ENCODE measurements at regions of chr10 and their contacts with region 1.

Region 1: DNA sequence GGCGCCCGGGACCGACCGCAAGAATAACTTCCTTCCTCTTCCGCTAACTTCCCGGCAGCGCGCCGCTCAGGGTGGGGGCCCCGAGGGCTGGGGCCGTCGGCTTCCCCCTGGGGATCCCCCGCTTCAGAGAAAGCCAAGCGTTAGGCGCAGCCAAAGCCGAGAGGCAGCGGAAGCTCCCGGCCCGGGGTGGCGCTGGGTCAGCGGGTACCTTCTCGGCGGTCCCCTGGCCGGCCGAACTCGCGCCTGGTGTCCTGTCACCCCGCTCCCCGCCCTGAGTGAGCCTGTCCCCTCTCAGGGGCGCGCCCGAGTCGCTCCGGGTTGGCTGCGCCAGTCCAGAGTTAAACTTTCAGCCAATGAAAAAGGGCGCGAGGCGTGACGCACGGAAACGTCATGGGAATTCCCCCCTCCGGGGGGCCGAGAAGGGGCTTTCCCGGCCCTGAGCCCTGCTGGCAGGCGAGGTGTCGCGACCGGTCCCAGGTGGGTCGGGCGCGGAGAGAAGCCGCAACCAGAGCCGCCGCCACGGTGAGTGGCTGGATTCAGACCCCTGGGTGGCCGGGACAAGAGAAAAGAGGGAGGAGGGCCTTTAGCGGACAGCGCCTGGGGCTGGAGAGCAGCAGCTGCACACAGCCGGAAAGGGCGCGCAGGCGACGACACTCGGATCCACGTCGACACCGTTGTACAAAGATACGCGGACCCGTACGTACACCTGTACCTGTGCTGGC is 1.3 kb upstream of the NFKB2 start:
- DNase-seq: peak; percentile 98
- H3K4me3 ChIP-seq: peak overlapping the region; percentile 61 to 76 (median 68)
- H3K27ac ChIP-seq: peak overlapping the region; percentile 97 to 99 (median 98)
- H3K4me1 ChIP-seq: peaks cover 0 to 47% (median 45%) of the 10 kb centered on the region in 4 donors
- H3K27me3 ChIP-seq: no peaks in the 10 kb centered on the region
- CTCF ChIP-seq: peak; percentile 18 to 99 (median 70)
- EP300 ChIP-seq: peak in 2 of 4 donors; percentile 78 to 92
- POLR2A ChIP-seq: peak; percentile 51 to 55

Region 2: GRCh38 chr10:101812606-101813005 is 581.6 kb before region 1 on chr10:
- intact Hi-C with region 1: no loop called
- DNase-seq: no peak
- H3K4me3 ChIP-seq: no peak overlapping the region
- H3K27ac ChIP-seq: no peak overlapping the region
- H3K4me1 ChIP-seq: peaks cover 0 to 51% (median 44%) of the 10 kb centered on the region in 4 donors
- H3K27me3 ChIP-seq: no peaks in the 10 kb centered on the region
- CTCF ChIP-seq: no peak
- EP300 ChIP-seq: no peak
- POLR2A ChIP-seq: no peak

Region 3: DNA sequence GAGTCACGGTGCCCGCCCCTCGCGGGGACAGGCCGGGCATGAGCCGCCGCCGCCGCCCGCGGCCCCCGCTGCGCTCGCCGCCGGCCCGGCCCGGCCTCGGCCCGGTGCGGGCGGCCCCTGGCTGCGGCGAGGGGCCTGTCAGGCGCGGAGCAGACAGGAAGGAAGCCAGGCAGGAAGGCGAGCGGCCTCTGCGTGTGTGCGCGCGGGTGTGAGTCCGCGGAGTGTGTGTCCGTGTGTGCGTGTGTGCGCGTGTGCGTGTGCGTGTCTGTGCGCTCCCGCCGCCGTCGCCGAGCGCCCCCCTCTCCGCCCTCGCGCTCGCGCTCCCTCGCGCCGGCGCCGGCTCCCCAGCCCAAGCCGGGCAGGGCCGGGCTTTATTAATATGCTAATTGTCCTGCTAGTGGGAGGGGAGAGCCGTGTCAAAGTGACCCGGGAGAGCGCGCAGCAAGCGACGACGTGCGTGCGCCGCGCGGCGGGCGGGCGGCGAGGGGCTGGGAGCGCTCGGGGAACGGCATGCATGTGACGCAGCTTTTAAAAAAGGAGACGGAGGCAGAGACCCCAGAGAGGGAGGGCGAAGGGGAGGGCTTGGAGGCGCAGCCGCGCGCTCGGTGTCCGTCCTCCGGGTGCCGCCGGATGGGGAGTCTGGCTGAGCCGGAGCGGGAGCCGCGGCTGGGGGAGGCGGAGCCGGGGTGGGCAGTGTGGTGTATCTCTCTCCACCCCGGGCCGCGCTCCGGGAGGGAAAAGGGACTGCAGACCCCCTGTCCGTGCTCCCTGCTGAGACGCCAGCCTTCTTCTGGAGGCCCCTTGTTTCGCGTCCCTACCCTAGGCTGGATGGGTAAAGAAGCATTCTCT is 273.9 kb before region 1 on chr10 and contains the start of gene LDB1:
- intact Hi-C with region 1: loop called (anchors 2 kb)
- DNase-seq: peak; percentile 92
- H3K4me3 ChIP-seq: peak within 1 kb of the TSS; percentile 87 to 94 (median 89)
- H3K27ac ChIP-seq: peak within 1 kb of the TSS; percentile 94 to 100 (median 100)
- H3K4me1 ChIP-seq: peaks cover 0 to 59% (median 54%) of the 10 kb centered on the region in 4 donors
- H3K27me3 ChIP-seq: no peaks in the 10 kb centered on the region
- CTCF ChIP-seq: no peak
- EP300 ChIP-seq: peak in 1 of 4 donors; percentile 39
- POLR2A ChIP-seq: peak; percentile 90 to 95
- total RNA-seq, gene LDB1: 62.1 to 88.4 (median 76.4) TPM

Region 4: DNA sequence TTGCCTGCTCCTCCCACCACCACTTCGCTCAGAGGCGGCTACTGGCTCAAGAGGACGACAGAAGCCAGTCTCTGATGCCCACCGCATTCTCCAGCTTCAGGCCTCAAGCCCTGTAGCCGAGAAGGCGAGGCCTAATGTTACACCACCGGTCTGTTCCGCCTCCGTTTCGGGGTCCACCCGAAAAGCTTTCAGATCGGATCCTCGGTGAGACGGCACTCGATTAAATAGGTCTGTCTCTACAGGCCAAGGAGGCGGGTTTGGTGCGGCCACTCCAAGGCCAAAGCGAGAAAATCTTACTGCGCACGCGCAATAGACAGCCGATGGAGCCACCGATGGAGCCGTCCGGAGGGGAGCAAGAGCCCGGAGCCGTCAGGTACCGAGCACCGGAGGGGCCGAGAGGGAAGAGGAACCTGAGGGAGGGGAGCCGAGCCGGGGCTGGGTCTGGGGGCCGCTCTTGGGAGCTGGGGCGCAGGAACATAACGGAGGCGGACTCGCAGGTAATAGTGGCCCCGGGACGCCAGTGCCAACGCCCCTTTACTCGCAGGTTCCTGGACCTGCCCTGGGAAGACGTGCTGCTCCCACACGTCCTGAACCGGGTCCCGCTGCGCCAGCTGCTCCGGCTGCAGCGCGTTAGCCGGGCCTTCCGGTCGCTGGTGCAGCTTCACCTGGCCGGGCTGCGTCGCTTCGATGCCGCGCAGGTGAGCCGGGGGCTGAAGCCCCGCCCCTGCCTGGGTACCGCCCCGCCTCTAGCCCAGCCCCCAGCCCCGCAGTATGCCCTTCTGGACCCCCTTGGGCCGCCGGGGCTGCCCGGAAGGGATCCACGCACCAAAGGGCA is 26.8 kb after region 1 on chr10 and contains the start of gene FBXL15:
- intact Hi-C with region 1: loop called (anchors 1 kb)
- DNase-seq: peak; percentile 99
- H3K4me3 ChIP-seq: peak within 1 kb of the TSS; percentile 61 to 89 (median 76)
- H3K27ac ChIP-seq: peak within 1 kb of the TSS; percentile 86 to 96 (median 91)
- H3K4me1 ChIP-seq: peaks cover 0 to 42% (median 36%) of the 10 kb centered on the region in 4 donors
- H3K27me3 ChIP-seq: peaks cover 0 to 27% (median 6%) of the 10 kb centered on the region in 3 donors
- CTCF ChIP-seq: no peak
- EP300 ChIP-seq: peak in 1 of 4 donors; percentile 63
- POLR2A ChIP-seq: peak in 1 of 2 donors; percentile 33
- total RNA-seq, gene FBXL15: 19.7 to 51.3 (median 34.2) TPM

Region 5: DNA sequence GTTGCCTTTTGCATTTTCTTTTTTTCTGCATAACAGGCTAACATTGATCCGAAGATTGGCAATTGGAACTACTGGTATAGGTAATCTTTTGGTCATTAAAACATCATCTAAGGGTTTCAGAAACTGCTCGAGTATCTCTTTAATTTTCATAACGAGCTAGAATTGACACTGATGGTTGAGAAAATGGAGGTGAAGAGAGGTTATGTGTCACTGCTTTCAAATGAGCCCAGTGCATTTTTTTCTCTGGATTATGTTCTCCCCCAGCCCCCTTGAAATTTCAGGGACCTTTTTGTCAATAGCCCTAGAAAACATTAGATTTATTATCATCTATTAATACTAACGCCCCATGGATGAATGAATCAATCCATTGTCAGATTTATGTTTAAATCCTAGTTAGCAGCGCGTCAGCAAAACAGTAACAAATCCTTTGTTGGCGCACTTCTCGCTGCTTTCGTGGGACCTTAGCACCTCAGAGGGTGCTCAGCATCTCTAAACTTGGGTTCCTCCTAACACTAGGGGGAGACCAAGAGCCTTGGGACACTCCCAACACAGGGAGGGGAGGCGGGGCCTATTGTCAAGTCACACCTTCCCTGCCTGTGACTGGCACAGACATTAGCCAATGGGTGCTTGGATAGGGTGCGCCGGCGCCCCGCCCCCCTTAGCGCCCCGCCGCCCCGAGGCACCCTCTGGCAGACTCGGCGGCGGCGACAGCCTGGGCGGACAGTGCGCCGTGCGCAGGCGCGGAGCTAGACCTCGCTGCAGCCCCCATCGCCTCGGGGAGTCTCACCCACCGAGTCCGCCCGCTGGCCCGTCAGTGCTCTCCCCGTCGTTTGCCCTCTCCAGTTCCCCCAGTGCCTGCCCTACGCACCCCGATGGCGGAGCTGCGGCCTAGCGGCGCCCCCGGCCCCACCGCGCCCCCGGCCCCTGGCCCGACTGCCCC is 109.3 kb after region 1 on chr10 and contains the start of gene SUFU:
- intact Hi-C with region 1: loop called (anchors 5 kb)
- DNase-seq: peak; percentile 99
- H3K4me3 ChIP-seq: peak within 1 kb of the TSS; percentile 81 to 97 (median 94)
- H3K27ac ChIP-seq: peak within 1 kb of the TSS; percentile 91 to 98 (median 94)
- H3K4me1 ChIP-seq: peaks cover 0 to 54% (median 47%) of the 10 kb centered on the region in 4 donors
- H3K27me3 ChIP-seq: no peaks in the 10 kb centered on the region
- CTCF ChIP-seq: peak; percentile 76 to 94 (median 84)
- EP300 ChIP-seq: no peak
- POLR2A ChIP-seq: peak in 1 of 2 donors; percentile 12
- total RNA-seq, gene SUFU: 5.0 to 10.5 (median 6.7) TPM

Region 6: DNA sequence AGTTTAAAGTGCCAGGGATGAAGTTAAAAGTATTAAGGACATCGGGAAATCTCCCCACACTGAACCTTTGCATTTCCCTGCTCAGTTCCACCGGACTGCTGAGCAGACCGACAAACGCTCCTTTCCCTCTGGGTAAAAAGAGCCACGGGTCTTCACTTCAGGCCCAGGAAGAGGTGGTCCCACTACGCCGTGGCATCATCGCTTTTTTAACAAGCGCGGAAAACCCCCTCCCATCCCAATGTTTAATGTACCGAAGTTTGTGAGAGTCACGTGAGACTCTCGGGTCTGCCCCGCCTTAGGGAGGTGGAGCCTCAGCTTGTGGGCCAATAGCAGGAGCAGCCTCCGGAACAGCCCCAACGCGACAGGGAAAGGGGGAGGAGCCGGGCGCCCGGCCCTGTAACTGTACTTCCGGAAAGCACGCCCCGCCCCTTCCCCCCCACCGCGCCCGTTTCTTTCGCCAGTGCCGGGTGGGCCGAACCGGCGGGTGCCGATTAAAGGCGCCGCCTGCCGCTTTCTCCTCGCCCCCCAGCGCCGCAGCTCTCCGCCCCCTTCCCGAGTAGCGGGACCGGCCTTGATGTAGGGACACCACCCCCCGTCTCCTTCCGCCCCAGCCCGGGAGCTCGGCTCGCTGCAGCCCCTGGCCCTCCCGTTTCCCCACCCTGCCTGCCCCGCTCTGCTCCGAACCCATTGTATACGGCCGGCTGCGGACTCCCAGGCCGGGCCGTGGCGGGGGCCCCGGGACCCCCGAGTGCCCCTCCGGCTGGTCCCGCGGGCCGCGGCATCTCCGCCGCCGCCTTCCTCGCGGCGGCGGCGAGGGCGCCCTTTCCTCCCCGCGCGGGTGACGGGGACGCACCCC is 247.9 kb after region 1 on chr10:
- intact Hi-C with region 1: loop called (anchors 10 kb)
- DNase-seq: peak; percentile 100
- H3K4me3 ChIP-seq: peak overlapping the region; percentile 57 to 97 (median 88)
- H3K27ac ChIP-seq: peak overlapping the region; percentile 92 to 100 (median 99)
- H3K4me1 ChIP-seq: peaks cover 0 to 24% (median 17%) of the 10 kb centered on the region in 4 donors
- H3K27me3 ChIP-seq: no peaks in the 10 kb centered on the region
- CTCF ChIP-seq: no peak
- EP300 ChIP-seq: peak in 2 of 4 donors; percentile 16
- POLR2A ChIP-seq: peak; percentile 92 to 93